Left ventricle myocardium inferior (tissue), 1 donor: ENCODE measurements at regions of chr2 and their contacts with region 1.

Region 1: GRCh38 chr2:191501561-191502168 is 176.3 kb upstream of the NABP1 start:
- DNase-seq: no peak
- H3K4me3 ChIP-seq: no peak overlapping the region
- H3K27ac ChIP-seq: peak overlapping the region; percentile 67
- H3K4me1 ChIP-seq: peaks cover 30% of the 10 kb centered on the region
- H3K27me3 ChIP-seq: no peaks in the 10 kb centered on the region
- CTCF ChIP-seq: peak; percentile 84

Region 2: GRCh38 chr2:191165176-191165643 is 336.5 kb before region 1 on chr2:
- intact Hi-C with region 1: loop called (anchors 5 kb)
- DNase-seq: no peak
- H3K4me3 ChIP-seq: no peak overlapping the region
- H3K27ac ChIP-seq: peak overlapping the region; percentile 65
- H3K4me1 ChIP-seq: peaks cover 24% of the 10 kb centered on the region
- H3K27me3 ChIP-seq: no peaks in the 10 kb centered on the region
- CTCF ChIP-seq: peak; percentile 73

Region 3: GRCh38 chr2:191218292-191218898 is 283.3 kb before region 1 on chr2:
- intact Hi-C with region 1: loop called (anchors 5 kb)
- DNase-seq: no peak
- H3K4me3 ChIP-seq: no peak overlapping the region
- H3K27ac ChIP-seq: peak overlapping the region; percentile 71
- H3K4me1 ChIP-seq: peaks cover 27% of the 10 kb centered on the region
- H3K27me3 ChIP-seq: no peaks in the 10 kb centered on the region
- CTCF ChIP-seq: peak; percentile 73

Region 4: GRCh38 chr2:191265311-191266170 is 236.1 kb before region 1 on chr2:
- intact Hi-C with region 1: no loop called
- DNase-seq: peak; percentile 18
- H3K4me3 ChIP-seq: peak overlapping the region; percentile 35
- H3K27ac ChIP-seq: peak overlapping the region; percentile 76
- H3K4me1 ChIP-seq: peaks cover 80% of the 10 kb centered on the region
- H3K27me3 ChIP-seq: no peaks in the 10 kb centered on the region
- CTCF ChIP-seq: no peak

Region 5: GRCh38 chr2:192004188-192004963 is 502.7 kb after region 1 on chr2:
- intact Hi-C with region 1: no loop called
- DNase-seq: no peak
- H3K4me3 ChIP-seq: no peak overlapping the region
- H3K27ac ChIP-seq: no peak overlapping the region
- H3K4me1 ChIP-seq: peaks cover 32% of the 10 kb centered on the region
- H3K27me3 ChIP-seq: no peaks in the 10 kb centered on the region
- CTCF ChIP-seq: no peak